Naive thymus-derived CD4-positive, alpha-beta T cell (primary cell): ENCODE measurements at regions of chr1 and their contacts with region 1.

Region 1: DNA sequence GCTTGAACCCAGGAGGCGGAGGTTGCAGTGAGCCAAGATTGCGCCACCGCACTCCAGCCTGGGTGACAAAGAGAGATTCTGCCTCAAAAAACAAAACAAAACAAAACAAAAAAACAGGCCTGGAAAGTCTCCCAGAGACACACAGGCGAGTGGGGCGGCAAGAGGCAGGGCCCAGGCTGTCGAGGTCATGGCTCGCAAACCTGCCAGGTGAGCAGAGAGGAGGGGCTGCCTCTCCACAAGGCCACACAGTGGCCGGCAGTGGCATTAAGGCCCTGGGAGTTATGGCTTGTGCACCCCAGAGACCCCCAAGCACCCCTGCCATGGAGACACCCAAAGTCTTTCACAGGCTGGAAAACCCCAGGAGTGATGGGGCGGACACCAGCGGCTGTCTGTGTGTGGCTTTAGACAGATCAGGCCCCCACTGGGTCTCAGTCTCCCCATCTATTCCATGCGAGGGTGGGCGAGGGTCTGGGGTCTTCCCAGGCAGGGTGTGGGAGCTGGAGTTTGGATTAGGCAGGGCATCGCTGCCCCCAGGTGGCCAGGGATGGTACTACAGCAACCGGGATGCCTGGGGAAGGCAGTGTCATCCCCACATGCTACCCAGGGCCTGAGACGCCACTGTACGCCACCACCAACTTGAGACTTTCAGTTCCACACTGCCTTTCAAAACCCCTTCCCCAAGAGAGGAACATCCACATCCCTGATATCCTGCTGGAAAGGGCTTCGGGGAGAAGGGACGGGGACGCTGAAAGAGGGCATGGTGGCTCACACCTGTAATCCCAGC is 7.3 kb upstream of the CTRC start:
- DNase-seq: peak; percentile 48 to 85 (median 68)
- ATAC-seq: peak; percentile 72
- H3K4me3 ChIP-seq: no peak overlapping the region
- H3K4me3 Mint-ChIP-seq: no peak overlapping the region
- H3K27ac ChIP-seq: no peak overlapping the region
- H3K27ac Mint-ChIP-seq: peak overlapping the region in 1 of 9 donors; percentile 77
- H3K4me1 ChIP-seq: no peaks in the 10 kb centered on the region
- H3K4me1 Mint-ChIP-seq: peaks cover 0 to 8% (median 0%) of the 10 kb centered on the region in 7 donors
- H3K27me3 ChIP-seq: no peaks in the 10 kb centered on the region
- H3K27me3 Mint-ChIP-seq: no peaks in the 10 kb centered on the region

Region 2: DNA sequence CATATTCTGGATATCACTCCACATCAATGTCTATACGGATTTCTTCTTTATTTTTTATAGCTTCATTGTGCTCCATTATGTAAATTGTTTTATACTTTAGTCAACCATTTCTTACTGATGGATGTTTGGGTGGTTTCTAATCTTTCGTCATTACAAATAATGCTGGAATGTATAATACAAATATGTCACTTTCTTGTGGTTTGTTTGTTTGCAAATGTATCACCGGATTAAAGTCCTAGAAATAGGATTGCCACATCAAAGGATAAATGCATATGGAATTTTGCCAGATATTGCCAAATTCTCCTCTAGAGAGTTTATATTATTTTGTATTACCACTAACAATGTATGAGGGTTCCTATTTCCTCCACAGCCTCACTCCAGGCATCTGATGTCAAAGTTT is 1779.7 kb before region 1 on chr1:
- CTCF ChIA-PET with region 1: no interaction called
- POLR2A ChIA-PET with region 1: no interaction called
- intact Hi-C with region 1: no loop called
- DNase-seq: no peak
- ATAC-seq: no peak
- H3K4me3 ChIP-seq: no peak overlapping the region
- H3K4me3 Mint-ChIP-seq: no peak overlapping the region
- H3K27ac ChIP-seq: no peak overlapping the region
- H3K27ac Mint-ChIP-seq: no peak overlapping the region
- H3K4me1 ChIP-seq: no peaks in the 10 kb centered on the region
- H3K4me1 Mint-ChIP-seq: no peaks in the 10 kb centered on the region
- H3K27me3 ChIP-seq: no peaks in the 10 kb centered on the region
- H3K27me3 Mint-ChIP-seq: peaks cover 11 to 34% (median 19%) of the 10 kb centered on the region in 5 donors

Region 3: GRCh38 chr1:15128520-15129313 is 302.3 kb before region 1 on chr1:
- CTCF ChIA-PET with region 1: interaction called, 4 read pairs
- POLR2A ChIA-PET with region 1: no interaction called
- intact Hi-C with region 1: loop called in 1 of 2 experiments (anchors 10 kb)
- DNase-seq: peak in 8 of 9 donors; percentile 15 to 75 (median 42)
- ATAC-seq: peak; percentile 97
- H3K4me3 ChIP-seq: no peak overlapping the region
- H3K4me3 Mint-ChIP-seq: no peak overlapping the region
- H3K27ac ChIP-seq: no peak overlapping the region
- H3K27ac Mint-ChIP-seq: no peak overlapping the region
- H3K4me1 ChIP-seq: no peaks in the 10 kb centered on the region
- H3K4me1 Mint-ChIP-seq: no peaks in the 10 kb centered on the region
- H3K27me3 ChIP-seq: no peaks in the 10 kb centered on the region
- H3K27me3 Mint-ChIP-seq: peaks cover 11 to 28% (median 17%) of the 10 kb centered on the region in 5 donors

Region 4: DNA sequence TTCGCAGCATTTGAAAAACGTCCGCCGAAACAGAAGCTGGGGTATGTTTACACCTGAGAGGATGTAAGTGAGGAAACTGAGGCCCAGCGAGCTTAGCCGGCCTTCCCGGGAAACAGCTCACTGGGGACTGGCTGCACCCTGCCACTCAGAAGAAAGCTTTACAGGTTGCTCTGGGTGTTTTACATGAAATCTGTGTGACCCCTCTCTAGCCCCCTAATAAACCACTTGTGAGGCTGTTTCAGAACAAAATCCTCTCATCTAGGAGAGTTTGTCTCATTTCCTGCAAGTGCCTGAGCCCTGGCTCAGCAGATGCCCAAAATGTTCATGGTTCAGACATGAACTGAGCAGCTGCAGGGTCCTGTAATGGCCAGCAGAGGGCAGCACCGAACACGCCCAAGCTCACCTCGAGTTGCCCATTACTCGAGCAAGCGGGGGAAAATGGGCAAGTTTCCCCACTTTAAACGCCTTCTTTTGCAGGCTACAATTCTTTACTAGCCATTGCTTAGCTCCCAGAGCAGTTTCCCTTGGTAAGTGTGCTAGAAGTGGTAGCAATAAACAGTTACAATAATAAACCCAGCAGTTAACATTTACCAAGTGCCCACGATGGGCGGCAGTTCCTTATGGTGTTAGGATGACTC is 107.5 kb before region 1 on chr1:
- CTCF ChIA-PET with region 1: interaction called, 64 read pairs
- POLR2A ChIA-PET with region 1: interaction called, 3 read pairs
- intact Hi-C with region 1: loop called (anchors 1 kb)
- DNase-seq: peak; percentile 38 to 70 (median 60)
- ATAC-seq: peak; percentile 98
- H3K4me3 ChIP-seq: no peak overlapping the region
- H3K4me3 Mint-ChIP-seq: no peak overlapping the region
- H3K27ac ChIP-seq: no peak overlapping the region
- H3K27ac Mint-ChIP-seq: no peak overlapping the region
- H3K4me1 ChIP-seq: no peaks in the 10 kb centered on the region
- H3K4me1 Mint-ChIP-seq: peaks cover 0 to 7% (median 0%) of the 10 kb centered on the region in 7 donors
- H3K27me3 ChIP-seq: no peaks in the 10 kb centered on the region
- H3K27me3 Mint-ChIP-seq: peaks cover 0 to 29% (median 5%) of the 10 kb centered on the region in 5 donors

Region 5: GRCh38 chr1:15384301-15384901 is 46.6 kb before region 1 on chr1:
- CTCF ChIA-PET with region 1: interaction called, 3 read pairs
- POLR2A ChIA-PET with region 1: no interaction called
- intact Hi-C with region 1: loop called in 1 of 2 experiments (anchors 10 kb)
- DNase-seq: no peak
- ATAC-seq: peak; percentile 67
- H3K4me3 ChIP-seq: no peak overlapping the region
- H3K4me3 Mint-ChIP-seq: peak overlapping the region in 6 of 10 donors; percentile 22 to 83 (median 45)
- H3K27ac ChIP-seq: no peak overlapping the region
- H3K27ac Mint-ChIP-seq: no peak overlapping the region
- H3K4me1 ChIP-seq: no peaks in the 10 kb centered on the region
- H3K4me1 Mint-ChIP-seq: peaks cover 0 to 22% (median 10%) of the 10 kb centered on the region in 7 donors
- H3K27me3 ChIP-seq: no peaks in the 10 kb centered on the region
- H3K27me3 Mint-ChIP-seq: peaks cover 14 to 51% (median 27%) of the 10 kb centered on the region in 5 donors

Region 6: DNA sequence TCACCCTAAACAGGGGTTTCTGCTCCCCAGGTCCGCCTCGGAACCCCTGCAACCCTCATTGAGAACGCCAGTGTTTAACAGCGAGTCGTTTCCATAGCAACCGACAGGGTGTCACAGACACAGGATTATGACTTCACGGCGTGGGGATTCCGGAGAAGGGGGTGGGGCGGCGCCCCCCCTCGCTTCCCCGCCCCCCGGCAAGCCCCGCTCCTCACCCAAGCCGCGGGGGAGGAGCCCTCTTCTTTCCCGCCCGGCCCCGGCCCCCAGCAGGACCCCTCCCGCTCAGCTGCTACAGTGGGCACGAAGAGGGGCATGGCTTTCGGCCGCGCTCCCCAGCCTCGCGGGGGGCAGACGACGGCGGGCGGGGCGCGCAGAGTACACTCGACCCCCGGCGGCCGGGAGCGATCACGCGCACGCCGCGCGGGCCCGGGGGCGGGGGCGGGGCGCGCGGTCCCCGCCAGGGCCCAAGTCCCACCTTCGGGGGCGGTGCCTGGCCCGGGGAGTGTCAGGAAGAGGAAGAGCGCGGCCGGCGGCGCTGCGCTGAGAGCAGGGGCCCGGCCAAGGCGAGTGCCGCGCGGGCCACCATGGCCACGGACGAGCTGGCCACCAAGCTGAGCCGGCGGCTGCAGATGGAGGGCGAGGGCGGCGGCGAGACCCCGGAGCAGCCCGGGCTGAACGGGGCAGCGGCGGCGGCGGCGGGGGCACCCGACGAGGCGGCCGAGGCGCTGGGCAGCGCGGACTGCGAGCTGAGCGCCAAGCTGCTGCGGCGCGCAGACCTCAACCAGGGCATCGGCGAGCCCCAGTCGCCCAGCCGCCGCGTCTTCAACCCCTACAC is 21.4 kb before region 1 on chr1 and contains the start of gene EFHD2:
- CTCF ChIA-PET with region 1: no interaction called
- POLR2A ChIA-PET with region 1: interaction called, 4 read pairs
- intact Hi-C with region 1: loop called in 1 of 2 experiments (anchors 1 kb)
- DNase-seq: peak; percentile 71 to 97 (median 82)
- ATAC-seq: peak; percentile 82
- H3K4me3 ChIP-seq: peak within 1 kb of the TSS; percentile 77
- H3K4me3 Mint-ChIP-seq: peak within 1 kb of the TSS; percentile 87 to 99 (median 92)
- H3K27ac ChIP-seq: peak within 1 kb of the TSS; percentile 94
- H3K27ac Mint-ChIP-seq: peak within 1 kb of the TSS; percentile 66 to 97 (median 95)
- H3K4me1 ChIP-seq: peaks cover 20 to 69% of the 10 kb centered on the region in 2 donors
- H3K4me1 Mint-ChIP-seq: peaks cover 6 to 52% (median 33%) of the 10 kb centered on the region in 7 donors
- H3K27me3 ChIP-seq: no peaks in the 10 kb centered on the region
- H3K27me3 Mint-ChIP-seq: peaks cover 0 to 33% (median 0%) of the 10 kb centered on the region in 5 donors
- total RNA-seq, gene EFHD2: 29.9 to 258 (median 82.6) TPM

Region 7: GRCh38 chr1:15452216-15452615 is 21.2 kb after region 1 on chr1:
- CTCF ChIA-PET with region 1: no interaction called
- POLR2A ChIA-PET with region 1: no interaction called
- intact Hi-C with region 1: no loop called
- DNase-seq: no peak
- ATAC-seq: no peak
- H3K4me3 ChIP-seq: no peak overlapping the region
- H3K4me3 Mint-ChIP-seq: no peak overlapping the region
- H3K27ac ChIP-seq: no peak overlapping the region
- H3K27ac Mint-ChIP-seq: no peak overlapping the region
- H3K4me1 ChIP-seq: no peaks in the 10 kb centered on the region
- H3K4me1 Mint-ChIP-seq: no peaks in the 10 kb centered on the region
- H3K27me3 ChIP-seq: no peaks in the 10 kb centered on the region
- H3K27me3 Mint-ChIP-seq: peaks cover 0 to 7% (median 2%) of the 10 kb centered on the region in 5 donors